Activated B cell treated with CpG ODN at 0.5 μM for 24 hours (primary cell): ENCODE measurements at regions of chr6 and their contacts with region 1.

Region 1: DNA sequence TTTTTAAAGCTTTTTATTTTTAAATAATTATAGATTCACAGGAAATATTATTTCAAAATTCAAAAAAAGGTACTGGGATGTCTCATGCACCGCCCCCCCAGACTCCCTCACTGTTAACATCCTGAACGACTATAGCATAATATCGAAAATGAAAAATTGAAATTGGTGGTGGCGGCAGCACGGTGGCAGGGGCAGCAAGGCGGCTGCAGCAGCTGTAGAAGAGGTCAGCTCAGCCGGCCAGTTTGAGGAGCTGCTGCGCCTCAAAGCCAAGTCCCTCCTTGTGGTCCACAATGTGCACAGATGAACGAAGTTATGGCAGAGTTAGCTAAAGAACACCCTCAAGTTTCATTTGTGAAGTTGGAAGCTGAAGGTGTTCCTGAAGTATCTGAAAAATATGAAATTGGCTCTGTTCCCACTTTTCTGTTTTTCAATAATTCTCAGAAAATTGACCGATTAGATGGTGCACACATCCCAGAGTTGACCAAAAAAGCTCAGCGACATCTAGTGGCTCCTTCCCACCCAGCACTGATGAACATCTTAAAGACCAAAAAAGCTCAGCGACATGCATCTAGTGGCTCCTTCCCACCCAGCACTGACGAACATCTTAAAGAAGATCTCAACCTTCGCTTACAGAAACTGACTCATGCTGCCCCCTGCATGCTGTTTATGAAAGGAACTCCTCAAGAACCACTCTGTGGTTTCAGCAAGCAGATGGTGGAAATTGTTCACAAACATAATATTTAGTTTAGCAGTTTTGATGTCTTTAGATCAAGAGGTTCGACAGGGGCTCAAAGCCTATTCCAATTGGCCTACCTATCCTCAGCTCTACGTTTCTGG is 100.8 kb downstream of the FAM217A start:
- DNase-seq: no peak
- ATAC-seq: peak; percentile 96
- H3K4me3 Mint-ChIP-seq: no peak overlapping the region
- H3K27ac Mint-ChIP-seq: no peak overlapping the region
- H3K4me1 Mint-ChIP-seq: peaks cover 5% of the 10 kb centered on the region
- H3K27me3 Mint-ChIP-seq: peaks cover 4% of the 10 kb centered on the region
- CTCF ChIP-seq: no peak

Region 2: DNA sequence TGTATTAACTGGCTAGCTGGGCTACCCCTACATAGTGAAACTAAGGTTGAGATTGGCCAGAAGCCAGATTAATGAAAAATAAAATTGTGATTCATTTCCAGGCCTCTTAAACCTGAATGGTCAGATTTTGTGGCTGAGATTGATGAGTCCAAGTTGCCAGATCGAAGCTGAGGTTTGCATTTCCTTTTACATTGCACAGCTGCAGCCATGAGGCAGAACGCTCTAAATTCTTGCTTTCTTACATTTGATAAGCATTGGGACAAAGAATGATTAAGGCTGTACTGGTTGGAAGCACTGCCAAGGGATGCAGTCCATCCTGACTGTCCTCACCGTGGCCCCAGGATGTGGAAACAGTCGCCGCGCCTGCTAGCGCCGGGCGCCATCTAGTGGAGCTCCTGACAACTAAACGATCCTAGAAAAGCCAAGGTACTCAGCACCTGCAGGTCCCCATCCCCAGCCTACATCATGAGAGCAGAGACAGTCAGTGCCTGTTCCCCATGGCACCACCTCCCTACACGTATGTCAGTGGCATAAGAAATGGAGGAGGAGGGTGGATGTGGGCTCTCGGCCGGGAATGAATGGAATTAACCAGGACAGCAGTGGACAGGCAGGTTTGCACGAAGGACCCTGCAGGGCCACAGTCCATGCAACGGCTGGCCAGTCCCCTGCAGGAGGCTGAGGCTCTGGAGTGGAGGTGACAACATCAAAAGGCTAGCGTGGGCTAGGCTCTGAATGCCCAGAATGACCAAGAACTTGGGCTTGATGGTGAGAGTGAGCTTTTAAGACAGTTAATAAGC is 245.6 kb before region 1 on chr6:
- CTCF ChIA-PET with region 1: interaction called, 10 read pairs
- POLR2A ChIA-PET with region 1: no interaction called
- intact Hi-C with region 1: no loop called
- DNase-seq: peak; percentile 54
- ATAC-seq: peak; percentile 61
- H3K4me3 Mint-ChIP-seq: no peak overlapping the region
- H3K27ac Mint-ChIP-seq: no peak overlapping the region
- H3K4me1 Mint-ChIP-seq: peaks cover 2% of the 10 kb centered on the region
- H3K27me3 Mint-ChIP-seq: peaks cover 2% of the 10 kb centered on the region
- CTCF ChIP-seq: no peak

Region 3: GRCh38 chr6:3751730-3752542 is 226.2 kb before region 1 on chr6:
- CTCF ChIA-PET with region 1: interaction called, 17 read pairs
- POLR2A ChIA-PET with region 1: no interaction called
- intact Hi-C with region 1: no loop called
- DNase-seq: peak; percentile 72
- ATAC-seq: peak; percentile 73
- H3K4me3 Mint-ChIP-seq: peak overlapping the region; percentile 72
- H3K27ac Mint-ChIP-seq: no peak overlapping the region
- H3K4me1 Mint-ChIP-seq: peaks cover 52% of the 10 kb centered on the region
- H3K27me3 Mint-ChIP-seq: no peaks in the 10 kb centered on the region
- CTCF ChIP-seq: no peak